Activated CD4-positive, alpha-beta memory T cell treated with anti-CD3 and anti-CD28 coated beads for 36 hours (primary cell): ENCODE measurements at regions of chr10 and their contacts with region 1.

Region 1: DNA sequence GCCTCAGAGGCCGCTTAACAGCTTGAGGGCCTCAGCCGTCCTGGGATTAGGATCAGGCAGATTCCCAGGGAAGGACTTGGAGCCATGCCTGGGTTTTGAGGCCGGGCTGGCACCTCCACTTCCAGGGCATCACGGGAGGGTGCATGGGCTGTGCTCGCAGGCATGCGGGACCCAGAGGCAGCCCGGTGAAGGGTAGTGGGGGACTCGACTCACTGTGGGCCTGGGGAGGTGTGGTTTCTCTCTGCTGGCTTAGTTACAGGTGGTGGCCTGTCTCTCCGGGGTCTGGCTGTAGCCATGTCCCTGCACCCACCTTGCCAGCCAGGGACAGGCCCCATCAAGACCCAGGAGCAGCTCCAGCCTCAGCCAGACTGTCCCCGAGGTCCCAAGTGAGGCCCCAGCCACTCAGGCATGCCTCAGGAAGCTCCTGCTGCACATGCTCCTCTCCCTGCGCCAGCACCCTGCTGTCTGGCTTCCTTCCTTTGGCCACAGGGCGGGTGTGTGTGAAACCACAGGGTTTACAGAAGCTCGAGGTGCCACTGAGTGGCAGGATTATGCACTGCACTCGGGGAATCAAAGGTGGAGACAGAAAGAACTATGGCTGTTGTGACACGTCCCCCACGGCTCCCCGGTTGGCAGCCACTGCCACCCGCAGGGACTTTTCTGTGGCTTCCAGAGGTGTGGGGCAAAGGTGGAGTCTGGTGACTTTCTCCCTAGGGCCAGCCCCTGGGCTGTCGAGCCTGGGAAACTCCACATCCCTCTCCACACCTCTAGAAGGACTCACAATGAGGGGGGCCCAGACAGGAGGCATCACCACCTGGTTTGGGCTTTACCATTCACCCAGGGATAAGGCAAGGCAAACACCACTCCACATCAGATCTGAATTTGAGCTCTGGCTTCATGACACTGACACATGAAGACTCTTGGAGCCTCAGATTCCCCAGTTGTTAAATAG is 19.7 kb downstream of the GOLGA7B start:
- DNase-seq: peak; percentile 92
- H3K4me3 Mint-ChIP-seq: no peak overlapping the region
- H3K27ac Mint-ChIP-seq: no peak overlapping the region
- H3K4me1 Mint-ChIP-seq: peaks cover 12% of the 10 kb centered on the region
- H3K27me3 Mint-ChIP-seq: no peaks in the 10 kb centered on the region

Region 2: DNA sequence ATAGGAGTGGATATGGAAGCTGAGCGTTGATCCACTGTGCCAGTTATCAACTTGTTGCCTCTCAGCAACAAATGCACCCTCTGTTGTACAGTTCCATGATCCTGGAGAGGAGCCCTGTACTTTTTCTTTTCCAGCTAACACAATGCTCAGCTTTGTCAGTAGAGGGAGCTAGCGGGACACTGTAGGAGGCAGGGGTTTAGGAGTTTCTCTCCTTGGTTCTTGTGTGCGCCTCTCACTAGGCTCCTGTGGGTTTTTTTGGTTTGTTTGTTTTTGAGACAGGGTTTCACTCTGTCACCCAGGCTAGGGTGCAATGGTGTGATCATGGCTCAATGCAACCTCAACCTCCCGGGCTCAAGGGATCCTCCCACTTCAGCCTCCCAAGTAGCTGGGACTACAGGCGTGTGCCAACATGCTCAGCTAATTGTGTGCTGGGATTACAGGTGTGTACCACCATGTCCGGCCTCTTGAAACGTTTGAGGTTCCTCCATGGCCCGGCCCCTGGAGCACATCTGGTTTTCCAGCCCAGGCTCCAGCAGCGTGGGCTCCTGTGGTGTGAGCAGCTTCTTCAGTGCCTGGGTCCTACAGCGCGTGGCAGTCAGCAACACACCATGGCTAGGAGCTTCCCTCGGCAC is 167.8 kb before region 1 on chr10:
- CTCF ChIA-PET with region 1: interaction called, 12 read pairs
- POLR2A ChIA-PET with region 1: no interaction called
- intact Hi-C with region 1: no loop called
- DNase-seq: peak; percentile 62
- H3K4me3 Mint-ChIP-seq: no peak overlapping the region
- H3K27ac Mint-ChIP-seq: no peak overlapping the region
- H3K4me1 Mint-ChIP-seq: no peaks in the 10 kb centered on the region
- H3K27me3 Mint-ChIP-seq: peaks cover 4% of the 10 kb centered on the region

Region 3: DNA sequence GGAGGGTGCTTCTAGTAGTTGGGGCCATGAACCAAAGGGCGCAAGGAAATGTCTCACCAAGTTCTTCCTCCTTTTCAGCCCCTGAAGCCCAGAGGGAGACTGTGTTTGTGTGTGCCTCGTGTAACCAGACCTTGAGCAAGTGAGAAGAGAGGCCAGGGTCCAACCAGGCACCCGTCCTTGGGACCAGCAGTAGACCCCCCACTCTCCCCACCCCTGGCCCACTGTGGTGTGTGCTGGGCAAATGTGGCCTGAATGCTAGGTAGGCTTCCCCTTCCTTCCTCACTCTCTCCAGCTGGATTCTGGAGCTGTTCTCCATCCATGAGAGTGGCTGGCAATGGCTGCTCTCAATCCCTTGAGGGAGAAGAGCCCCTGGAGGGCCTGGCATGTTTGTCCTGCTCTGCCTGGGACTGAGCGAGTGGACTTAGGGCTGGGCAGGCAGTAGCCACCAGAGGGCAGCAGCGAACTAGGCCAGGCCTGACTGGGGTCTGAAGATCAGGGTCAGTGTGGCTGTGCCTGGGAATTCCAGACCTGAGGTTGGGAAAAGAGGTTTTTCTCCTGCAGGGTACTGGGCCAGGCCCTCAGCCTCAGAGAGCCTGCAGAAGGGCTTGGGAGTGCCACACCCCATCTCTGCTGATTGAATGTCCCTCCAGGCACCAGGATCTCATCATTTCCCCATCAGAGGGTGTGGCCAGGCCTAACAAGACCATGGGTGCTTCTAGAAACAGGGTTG is 110.0 kb before region 1 on chr10:
- CTCF ChIA-PET with region 1: interaction called, 6 read pairs
- POLR2A ChIA-PET with region 1: no interaction called
- intact Hi-C with region 1: loop called (anchors 1 kb)
- DNase-seq: peak; percentile 58
- H3K4me3 Mint-ChIP-seq: no peak overlapping the region
- H3K27ac Mint-ChIP-seq: no peak overlapping the region
- H3K4me1 Mint-ChIP-seq: no peaks in the 10 kb centered on the region
- H3K27me3 Mint-ChIP-seq: no peaks in the 10 kb centered on the region

Region 4: DNA sequence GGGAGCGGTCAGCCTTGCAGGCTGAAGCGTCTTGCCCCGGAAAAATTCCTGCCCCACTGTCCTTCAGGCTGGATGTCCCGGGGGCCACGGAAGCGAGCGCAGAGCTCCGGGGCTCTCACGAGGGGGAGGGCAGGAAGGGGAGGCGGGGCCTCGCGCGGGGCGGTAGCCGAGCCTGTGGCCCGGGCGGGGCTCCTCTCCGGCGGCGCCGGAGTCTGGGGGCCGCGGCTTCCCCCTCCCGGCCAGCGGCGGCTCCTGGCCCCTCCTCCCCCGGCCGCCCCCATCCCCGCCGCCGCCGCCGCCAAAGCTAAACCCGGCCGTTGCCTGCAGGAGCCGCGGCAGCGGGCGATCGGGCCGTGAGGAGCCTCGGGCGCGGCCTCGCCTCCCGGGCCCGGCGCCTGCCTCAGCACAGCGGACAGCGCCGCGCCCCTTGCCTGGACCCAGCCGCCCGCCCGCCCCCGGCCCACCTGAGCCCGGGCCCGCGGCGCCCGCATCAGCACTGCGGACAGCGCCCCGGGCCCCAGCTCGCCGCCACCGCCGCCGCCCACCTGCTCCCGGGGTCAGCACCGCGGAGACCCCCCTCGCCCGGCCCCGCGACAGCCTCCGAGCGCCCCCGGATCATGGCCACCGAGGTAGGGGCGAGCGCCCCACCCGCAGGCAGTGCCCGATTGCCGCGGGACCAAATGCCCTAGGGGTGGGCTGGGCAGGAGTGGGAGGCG is 19.5 kb before region 1 on chr10 and contains the start of gene GOLGA7B:
- CTCF ChIA-PET with region 1: interaction called, 10 read pairs
- POLR2A ChIA-PET with region 1: no interaction called
- intact Hi-C with region 1: loop called (anchors 1 kb)
- DNase-seq: peak; percentile 68
- H3K4me3 Mint-ChIP-seq: peak within 1 kb of the TSS; percentile 73
- H3K27ac Mint-ChIP-seq: peak within 1 kb of the TSS; percentile 9
- H3K4me1 Mint-ChIP-seq: peaks cover 37% of the 10 kb centered on the region
- H3K27me3 Mint-ChIP-seq: no peaks in the 10 kb centered on the region
- total RNA-seq, gene GOLGA7B: 0.86 to 0.87 TPM

Region 5: GRCh38 chr10:97921581-97922021 is 52.2 kb after region 1 on chr10:
- CTCF ChIA-PET with region 1: no interaction called
- POLR2A ChIA-PET with region 1: no interaction called
- intact Hi-C with region 1: no loop called
- DNase-seq: no peak
- H3K4me3 Mint-ChIP-seq: no peak overlapping the region
- H3K27ac Mint-ChIP-seq: no peak overlapping the region
- H3K4me1 Mint-ChIP-seq: peaks cover 4% of the 10 kb centered on the region
- H3K27me3 Mint-ChIP-seq: peaks cover 19% of the 10 kb centered on the region